ENCODE measurements at regions of chrX and their contacts with region 1.

Region 1: GRCh38 chrX:40097497-40098263 is at the start of gene BCOR:
- DNase-seq: peak; percentile 55 to 88 (median 77)
- ATAC-seq: peak; percentile 27
- H3K4me3 ChIP-seq: peak within 1 kb of the TSS; percentile 69
- H3K4me3 Mint-ChIP-seq: peak within 1 kb of the TSS; percentile 95
- H3K27ac ChIP-seq: peak within 1 kb of the TSS in 1 of 2 donors; percentile 74
- H3K27ac Mint-ChIP-seq: peak within 1 kb of the TSS; percentile 96
- H3K4me1 ChIP-seq: peaks cover 41% of the 10 kb centered on the region
- H3K4me1 Mint-ChIP-seq: peaks cover 27% of the 10 kb centered on the region
- H3K27me3 ChIP-seq: no peaks in the 10 kb centered on the region
- H3K27me3 Mint-ChIP-seq: no peaks in the 10 kb centered on the region
- CTCF ChIP-seq: no peak
- total RNA-seq, gene BCOR: 26.1 to 26.3 TPM

Region 2: GRCh38 chrX:39144956-39145355 is 952.7 kb before region 1 on chrX:
- CTCF ChIA-PET with region 1: no interaction called
- POLR2A ChIA-PET with region 1: no interaction called
- intact Hi-C with region 1: no loop called
- DNase-seq: peak in 2 of 14 experiments; percentile 40 to 60
- ATAC-seq: no peak
- H3K4me3 ChIP-seq: no peak overlapping the region
- H3K4me3 Mint-ChIP-seq: no peak overlapping the region
- H3K27ac ChIP-seq: no peak overlapping the region
- H3K27ac Mint-ChIP-seq: no peak overlapping the region
- H3K4me1 ChIP-seq: no peaks in the 10 kb centered on the region
- H3K4me1 Mint-ChIP-seq: peaks cover 3% of the 10 kb centered on the region
- H3K27me3 ChIP-seq: no peaks in the 10 kb centered on the region
- H3K27me3 Mint-ChIP-seq: no peaks in the 10 kb centered on the region
- CTCF ChIP-seq: no peak

Region 3: DNA sequence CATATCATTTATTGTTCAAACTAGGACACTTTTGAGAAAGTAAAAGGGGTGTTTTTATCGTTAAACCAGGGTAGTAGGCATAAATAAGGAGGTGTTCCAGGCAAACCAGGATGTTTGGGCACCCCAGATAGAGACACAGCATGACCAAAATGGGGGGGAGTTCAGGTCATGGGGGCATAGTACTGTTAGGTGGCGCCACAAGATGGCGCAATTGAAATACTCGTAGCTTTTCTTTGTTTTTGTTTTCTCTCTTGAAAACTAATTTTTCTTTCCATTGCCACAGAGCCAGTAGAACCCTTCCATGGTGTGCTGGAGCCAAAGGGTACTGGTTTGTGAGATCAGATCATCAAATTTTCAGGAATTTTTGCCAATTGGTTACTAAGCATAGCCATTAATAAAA is 283.3 kb before region 1 on chrX:
- CTCF ChIA-PET with region 1: no interaction called
- POLR2A ChIA-PET with region 1: interaction called, 5 read pairs
- intact Hi-C with region 1: loop called in 1 of 2 experiments (anchors 10 kb)
- DNase-seq: peak in 13 of 14 experiments; percentile 9 to 75 (median 33)
- ATAC-seq: peak; percentile 63
- H3K4me3 ChIP-seq: no peak overlapping the region
- H3K4me3 Mint-ChIP-seq: no peak overlapping the region
- H3K27ac ChIP-seq: no peak overlapping the region
- H3K27ac Mint-ChIP-seq: no peak overlapping the region
- H3K4me1 ChIP-seq: peaks cover 14% of the 10 kb centered on the region
- H3K4me1 Mint-ChIP-seq: peaks cover 18% of the 10 kb centered on the region
- H3K27me3 ChIP-seq: no peaks in the 10 kb centered on the region
- H3K27me3 Mint-ChIP-seq: no peaks in the 10 kb centered on the region
- CTCF ChIP-seq: peak; percentile 40

Region 4: DNA sequence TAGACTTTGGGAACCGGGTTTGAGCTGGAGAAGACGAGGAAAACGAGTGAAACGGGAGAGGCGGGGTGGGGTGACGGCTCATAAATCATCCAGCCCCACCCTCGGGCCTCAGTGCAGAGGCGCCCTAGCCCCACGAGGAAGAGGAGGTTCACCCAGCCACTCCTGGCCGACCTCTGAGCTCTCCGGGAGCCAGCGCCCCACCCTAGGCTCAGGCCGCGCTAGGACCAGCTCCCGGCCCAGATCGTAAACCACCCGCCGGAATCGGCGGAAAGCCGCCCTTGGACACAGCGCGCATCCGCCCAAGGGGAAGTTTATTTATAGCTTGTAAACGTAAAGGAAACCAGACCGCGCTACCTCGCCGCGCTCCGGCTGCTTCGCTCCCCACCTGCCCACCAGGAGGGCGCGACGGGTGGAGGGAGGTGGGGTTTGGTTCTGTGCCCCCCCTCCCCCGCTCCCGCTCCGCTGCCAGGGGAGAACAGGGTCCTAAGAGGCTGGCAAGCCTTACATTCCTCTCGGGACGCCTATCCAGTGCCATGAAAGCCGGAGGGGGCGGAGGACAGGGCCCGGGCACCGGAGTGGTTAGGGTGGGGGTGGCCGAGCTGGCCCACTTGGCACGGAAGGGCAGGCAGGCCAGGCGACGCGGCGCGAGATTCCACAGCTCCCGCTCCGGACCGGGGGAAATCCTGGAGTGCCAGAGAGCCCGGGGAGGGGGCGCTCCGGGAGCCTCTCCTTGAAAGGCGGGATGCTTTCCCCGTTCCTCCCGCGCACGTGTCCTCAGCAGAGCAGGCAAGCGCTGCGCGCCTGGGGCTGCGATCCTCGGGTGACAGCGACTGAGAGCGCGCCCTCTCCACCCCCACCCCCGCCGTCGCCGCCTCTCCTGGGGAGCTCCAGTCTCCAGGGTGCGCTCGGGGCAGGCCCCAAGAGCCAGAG is 84.1 kb before region 1 on chrX:
- CTCF ChIA-PET with region 1: no interaction called
- POLR2A ChIA-PET with region 1: interaction called, 14 read pairs
- intact Hi-C with region 1: no loop called
- DNase-seq: peak in 7 of 14 experiments; percentile 3 to 67 (median 40)
- ATAC-seq: peak; percentile 30
- H3K4me3 ChIP-seq: peak overlapping the region; percentile 61
- H3K4me3 Mint-ChIP-seq: peak overlapping the region; percentile 81
- H3K27ac ChIP-seq: no peak overlapping the region
- H3K27ac Mint-ChIP-seq: no peak overlapping the region
- H3K4me1 ChIP-seq: peaks cover 52% of the 10 kb centered on the region
- H3K4me1 Mint-ChIP-seq: peaks cover 32% of the 10 kb centered on the region
- H3K27me3 ChIP-seq: peaks cover 0 to 29% of the 10 kb centered on the region in 2 experiments
- H3K27me3 Mint-ChIP-seq: peaks cover 24% of the 10 kb centered on the region
- CTCF ChIP-seq: no peak

Region 5: DNA sequence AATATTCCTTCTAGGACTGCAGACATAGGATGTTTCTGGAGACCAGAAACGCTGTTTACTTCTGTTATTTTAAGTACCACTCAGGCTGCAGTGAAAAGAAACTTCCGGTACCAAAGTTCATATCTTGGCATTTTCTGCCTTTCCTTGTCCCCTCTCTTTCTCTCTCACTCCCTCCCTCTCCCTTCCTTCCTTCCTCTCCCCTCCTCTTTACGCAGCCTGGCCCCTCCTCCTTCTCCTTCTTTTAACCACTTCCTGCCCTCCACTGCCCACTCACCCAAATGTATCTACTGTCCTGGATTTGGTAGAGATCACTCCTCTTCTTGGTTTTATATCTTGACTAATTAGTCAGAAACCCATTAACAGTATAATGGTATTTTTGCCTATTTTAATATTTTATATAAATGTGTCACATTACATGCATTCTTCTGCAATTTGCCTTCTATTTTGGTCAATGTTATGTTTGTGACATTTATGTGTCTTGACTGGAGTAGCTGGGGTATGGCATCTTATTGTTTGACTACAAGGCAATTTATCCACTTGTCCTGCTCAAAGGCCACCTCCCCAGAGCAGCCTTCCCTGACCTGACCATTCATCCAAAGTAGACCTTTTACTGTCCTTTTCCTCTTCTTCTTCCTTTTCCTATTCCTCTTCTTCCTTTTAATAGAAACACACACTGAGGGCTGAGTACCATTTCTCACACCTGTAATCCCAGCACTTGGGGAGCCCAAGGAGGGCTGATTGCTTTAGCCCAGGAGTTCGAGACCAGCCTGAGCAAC is 56.8 kb before region 1 on chrX:
- CTCF ChIA-PET with region 1: no interaction called
- POLR2A ChIA-PET with region 1: no interaction called
- intact Hi-C with region 1: no loop called
- DNase-seq: no peak
- ATAC-seq: no peak
- H3K4me3 ChIP-seq: no peak overlapping the region
- H3K4me3 Mint-ChIP-seq: no peak overlapping the region
- H3K27ac ChIP-seq: no peak overlapping the region
- H3K27ac Mint-ChIP-seq: peak overlapping the region; percentile 54
- H3K4me1 ChIP-seq: peaks cover 17% of the 10 kb centered on the region
- H3K4me1 Mint-ChIP-seq: peaks cover 19% of the 10 kb centered on the region
- H3K27me3 ChIP-seq: no peaks in the 10 kb centered on the region
- H3K27me3 Mint-ChIP-seq: no peaks in the 10 kb centered on the region
- CTCF ChIP-seq: no peak

Region 6: GRCh38 chrX:40108959-40109287 is 11.2 kb after region 1 on chrX:
- CTCF ChIA-PET with region 1: interaction called, 3 read pairs
- POLR2A ChIA-PET with region 1: interaction called, 63 read pairs
- intact Hi-C with region 1: no loop called
- DNase-seq: peak in 12 of 14 experiments; percentile 40 to 86 (median 66)
- ATAC-seq: peak; percentile 43
- H3K4me3 ChIP-seq: peak overlapping the region; percentile 42
- H3K4me3 Mint-ChIP-seq: no peak overlapping the region
- H3K27ac ChIP-seq: no peak overlapping the region
- H3K27ac Mint-ChIP-seq: no peak overlapping the region
- H3K4me1 ChIP-seq: peaks cover 32% of the 10 kb centered on the region
- H3K4me1 Mint-ChIP-seq: peaks cover 4% of the 10 kb centered on the region
- H3K27me3 ChIP-seq: peaks cover 0 to 1% of the 10 kb centered on the region in 2 experiments
- H3K27me3 Mint-ChIP-seq: no peaks in the 10 kb centered on the region
- CTCF ChIP-seq: no peak

Region 7: DNA sequence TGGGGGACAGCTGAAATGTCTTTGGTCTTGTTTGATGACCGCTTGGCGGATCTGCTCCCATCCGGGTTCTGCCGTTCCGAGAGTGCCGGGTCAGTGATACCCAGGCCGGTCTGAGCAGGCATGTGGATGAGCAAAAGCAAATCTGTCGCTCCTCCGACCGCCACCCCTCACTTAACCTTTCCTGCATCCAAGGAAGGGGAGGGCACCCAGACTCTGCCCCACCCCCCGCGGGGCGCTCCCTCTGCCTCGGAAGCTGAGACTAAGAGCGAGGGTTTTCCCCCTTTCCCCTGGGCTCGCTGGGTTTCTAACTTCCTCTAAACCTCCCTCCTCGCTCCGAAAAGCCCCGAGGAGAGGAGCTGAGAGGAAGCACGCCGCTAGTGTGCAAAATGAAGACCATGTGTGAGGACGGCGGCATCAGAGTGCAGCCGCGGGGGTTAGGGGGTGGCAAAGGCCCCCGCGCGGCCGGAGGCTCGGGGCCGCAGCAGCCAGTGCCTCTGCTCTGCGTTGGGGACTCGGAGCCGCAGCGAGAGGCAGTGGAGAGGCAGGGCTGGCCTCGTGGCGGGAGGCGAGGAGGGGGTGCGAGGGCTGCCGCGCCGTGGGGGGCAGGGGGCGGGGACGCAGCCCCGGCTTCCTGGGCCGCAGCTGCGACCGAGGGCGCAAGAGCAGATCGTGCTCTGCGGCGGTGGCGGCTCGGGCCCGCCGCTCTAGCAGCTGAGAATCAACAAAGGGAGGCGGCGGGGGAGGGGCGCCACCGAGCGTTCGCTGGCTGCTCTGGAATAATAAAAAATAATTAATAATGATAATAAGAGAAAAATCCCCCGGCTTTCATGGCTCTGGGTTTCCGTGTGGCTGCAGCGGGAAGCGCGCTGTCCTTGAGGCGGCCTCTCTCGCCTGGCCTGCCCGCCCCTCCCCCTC is 55.9 kb after region 1 on chrX:
- CTCF ChIA-PET with region 1: no interaction called
- POLR2A ChIA-PET with region 1: interaction called, 82 read pairs
- intact Hi-C with region 1: loop called (anchors 5 kb)
- DNase-seq: peak in 9 of 14 experiments; percentile 37 to 85 (median 57)
- ATAC-seq: peak; percentile 62
- H3K4me3 ChIP-seq: peak overlapping the region; percentile 55
- H3K4me3 Mint-ChIP-seq: peak overlapping the region; percentile 92
- H3K27ac ChIP-seq: no peak overlapping the region
- H3K27ac Mint-ChIP-seq: peak overlapping the region; percentile 55
- H3K4me1 ChIP-seq: peaks cover 44% of the 10 kb centered on the region
- H3K4me1 Mint-ChIP-seq: peaks cover 11% of the 10 kb centered on the region
- H3K27me3 ChIP-seq: no peaks in the 10 kb centered on the region
- H3K27me3 Mint-ChIP-seq: no peaks in the 10 kb centered on the region
- CTCF ChIP-seq: no peak

Region 8: GRCh38 chrX:40175511-40176350 is 78.1 kb after region 1 on chrX:
- CTCF ChIA-PET with region 1: interaction called, 5 read pairs
- POLR2A ChIA-PET with region 1: interaction called, 236 read pairs
- intact Hi-C with region 1: loop called (anchors 2 to 5 kb)
- DNase-seq: peak; percentile 63 to 90 (median 78)
- ATAC-seq: peak; percentile 46
- H3K4me3 ChIP-seq: peak overlapping the region; percentile 73
- H3K4me3 Mint-ChIP-seq: peak overlapping the region; percentile 97
- H3K27ac ChIP-seq: peak overlapping the region; percentile 90 to 96
- H3K27ac Mint-ChIP-seq: peak overlapping the region; percentile 100
- H3K4me1 ChIP-seq: peaks cover 59% of the 10 kb centered on the region
- H3K4me1 Mint-ChIP-seq: peaks cover 42% of the 10 kb centered on the region
- H3K27me3 ChIP-seq: no peaks in the 10 kb centered on the region
- H3K27me3 Mint-ChIP-seq: no peaks in the 10 kb centered on the region
- CTCF ChIP-seq: no peak